ENCODE measurements at regions of chr17 and their contacts with region 1.

Region 1: DNA sequence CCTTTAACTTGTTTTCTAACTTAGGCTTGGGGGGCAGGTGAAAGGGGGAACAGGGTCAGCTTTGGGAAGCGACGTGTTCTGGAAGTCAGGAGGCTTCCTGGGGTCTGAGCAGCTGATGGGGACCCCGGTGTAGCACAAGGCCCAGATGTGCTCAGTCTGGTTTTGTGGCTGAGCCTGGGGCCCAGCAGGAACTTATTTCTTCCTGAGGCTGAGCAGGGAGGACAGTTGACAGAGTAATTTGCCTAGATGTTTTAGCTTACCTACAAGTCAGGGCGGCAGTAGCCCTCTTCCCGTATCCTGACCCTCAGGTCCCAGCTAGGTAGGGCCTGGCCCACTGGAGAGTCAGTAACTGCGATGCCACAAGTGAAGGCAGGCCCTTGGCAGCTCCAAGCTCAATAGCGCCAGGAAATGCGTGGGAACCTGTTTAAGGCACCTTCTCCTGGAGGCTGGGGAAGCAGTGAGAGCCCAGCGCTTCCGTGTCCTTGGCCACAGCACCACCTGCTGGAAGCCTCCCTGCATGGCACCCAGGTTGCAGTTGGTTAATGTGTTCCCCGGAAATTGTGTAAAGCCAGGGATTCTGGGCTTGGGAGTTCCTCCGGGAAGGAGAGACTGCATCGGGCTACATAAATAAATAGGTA is 5.2 kb downstream of the CCR7 start:
- DNase-seq: peak; percentile 74 to 88 (median 82)
- ATAC-seq: peak; percentile 60
- H3K4me3 ChIP-seq: peak overlapping the region; percentile 90
- H3K4me3 Mint-ChIP-seq: peak overlapping the region; percentile 90 to 100 (median 98)
- H3K27ac ChIP-seq: peak overlapping the region; percentile 99
- H3K27ac Mint-ChIP-seq: peak overlapping the region; percentile 92 to 100 (median 100)
- H3K4me1 ChIP-seq: peaks cover 50 to 52% of the 10 kb centered on the region in 2 donors
- H3K4me1 Mint-ChIP-seq: peaks cover 39 to 88% (median 58%) of the 10 kb centered on the region in 7 donors
- H3K27me3 ChIP-seq: no peaks in the 10 kb centered on the region
- H3K27me3 Mint-ChIP-seq: peaks cover 0 to under 1% (median 0%) of the 10 kb centered on the region in 5 donors

Region 2: GRCh38 chr17:40399185-40399584 is 160.9 kb before region 1 on chr17:
- CTCF ChIA-PET with region 1: interaction called, 4 read pairs
- POLR2A ChIA-PET with region 1: interaction called, 3 read pairs
- intact Hi-C with region 1: loop called in 1 of 2 experiments (anchors 1 kb)
- DNase-seq: peak in 6 of 9 donors; percentile 39 to 69 (median 60)
- ATAC-seq: peak; percentile 75
- H3K4me3 ChIP-seq: no peak overlapping the region
- H3K4me3 Mint-ChIP-seq: no peak overlapping the region
- H3K27ac ChIP-seq: no peak overlapping the region
- H3K27ac Mint-ChIP-seq: peak overlapping the region in 3 of 9 donors; percentile 6 to 65 (median 64)
- H3K4me1 ChIP-seq: no peaks in the 10 kb centered on the region
- H3K4me1 Mint-ChIP-seq: peaks cover 8 to 36% (median 22%) of the 10 kb centered on the region in 7 donors
- H3K27me3 ChIP-seq: no peaks in the 10 kb centered on the region
- H3K27me3 Mint-ChIP-seq: no peaks in the 10 kb centered on the region

Region 3: GRCh38 chr17:40443583-40444327 is 116.3 kb before region 1 on chr17:
- CTCF ChIA-PET with region 1: interaction called, 5 read pairs
- POLR2A ChIA-PET with region 1: interaction called, 4 read pairs
- intact Hi-C with region 1: loop called in 1 of 2 experiments (anchors 1 kb)
- DNase-seq: peak; percentile 40 to 80 (median 61)
- ATAC-seq: peak; percentile 87
- H3K4me3 ChIP-seq: peak overlapping the region; percentile 21
- H3K4me3 Mint-ChIP-seq: peak overlapping the region; percentile 65 to 90 (median 84)
- H3K27ac ChIP-seq: peak overlapping the region; percentile 1
- H3K27ac Mint-ChIP-seq: peak overlapping the region in 8 of 9 donors; percentile 60 to 93 (median 78)
- H3K4me1 ChIP-seq: peaks cover 25 to 27% of the 10 kb centered on the region in 2 donors
- H3K4me1 Mint-ChIP-seq: peaks cover 30 to 58% (median 33%) of the 10 kb centered on the region in 7 donors
- H3K27me3 ChIP-seq: no peaks in the 10 kb centered on the region
- H3K27me3 Mint-ChIP-seq: peaks cover 0 to 5% (median 0%) of the 10 kb centered on the region in 5 donors

Region 4: GRCh38 chr17:40542558-40543411 is 17.3 kb before region 1 on chr17:
- CTCF ChIA-PET with region 1: interaction called, 88 read pairs
- POLR2A ChIA-PET with region 1: interaction called, 1,524 read pairs
- intact Hi-C with region 1: loop called (anchors 1 kb)
- DNase-seq: peak in 3 of 9 donors; percentile 5 to 57 (median 57)
- ATAC-seq: no peak
- H3K4me3 ChIP-seq: no peak overlapping the region
- H3K4me3 Mint-ChIP-seq: peak overlapping the region; percentile 16 to 87 (median 67)
- H3K27ac ChIP-seq: peak overlapping the region; percentile 6
- H3K27ac Mint-ChIP-seq: peak overlapping the region; percentile 70 to 97 (median 92)
- H3K4me1 ChIP-seq: peaks cover 69 to 84% of the 10 kb centered on the region in 2 donors
- H3K4me1 Mint-ChIP-seq: peaks cover 60 to 94% (median 89%) of the 10 kb centered on the region in 7 donors
- H3K27me3 ChIP-seq: no peaks in the 10 kb centered on the region
- H3K27me3 Mint-ChIP-seq: no peaks in the 10 kb centered on the region

Region 5: GRCh38 chr17:40588552-40588951 is 28.5 kb after region 1 on chr17:
- CTCF ChIA-PET with region 1: interaction called, 11 read pairs
- POLR2A ChIA-PET with region 1: interaction called, 598 read pairs
- intact Hi-C with region 1: no loop called
- DNase-seq: peak in 1 of 9 donors; percentile 45
- ATAC-seq: no peak
- H3K4me3 ChIP-seq: peak overlapping the region; percentile 14
- H3K4me3 Mint-ChIP-seq: peak overlapping the region; percentile 33 to 90 (median 76)
- H3K27ac ChIP-seq: peak overlapping the region; percentile 47
- H3K27ac Mint-ChIP-seq: peak overlapping the region; percentile 21 to 99 (median 96)
- H3K4me1 ChIP-seq: peaks cover 3 to 61% of the 10 kb centered on the region in 2 donors
- H3K4me1 Mint-ChIP-seq: peaks cover 53 to 94% (median 85%) of the 10 kb centered on the region in 7 donors
- H3K27me3 ChIP-seq: no peaks in the 10 kb centered on the region
- H3K27me3 Mint-ChIP-seq: no peaks in the 10 kb centered on the region

Region 6: DNA sequence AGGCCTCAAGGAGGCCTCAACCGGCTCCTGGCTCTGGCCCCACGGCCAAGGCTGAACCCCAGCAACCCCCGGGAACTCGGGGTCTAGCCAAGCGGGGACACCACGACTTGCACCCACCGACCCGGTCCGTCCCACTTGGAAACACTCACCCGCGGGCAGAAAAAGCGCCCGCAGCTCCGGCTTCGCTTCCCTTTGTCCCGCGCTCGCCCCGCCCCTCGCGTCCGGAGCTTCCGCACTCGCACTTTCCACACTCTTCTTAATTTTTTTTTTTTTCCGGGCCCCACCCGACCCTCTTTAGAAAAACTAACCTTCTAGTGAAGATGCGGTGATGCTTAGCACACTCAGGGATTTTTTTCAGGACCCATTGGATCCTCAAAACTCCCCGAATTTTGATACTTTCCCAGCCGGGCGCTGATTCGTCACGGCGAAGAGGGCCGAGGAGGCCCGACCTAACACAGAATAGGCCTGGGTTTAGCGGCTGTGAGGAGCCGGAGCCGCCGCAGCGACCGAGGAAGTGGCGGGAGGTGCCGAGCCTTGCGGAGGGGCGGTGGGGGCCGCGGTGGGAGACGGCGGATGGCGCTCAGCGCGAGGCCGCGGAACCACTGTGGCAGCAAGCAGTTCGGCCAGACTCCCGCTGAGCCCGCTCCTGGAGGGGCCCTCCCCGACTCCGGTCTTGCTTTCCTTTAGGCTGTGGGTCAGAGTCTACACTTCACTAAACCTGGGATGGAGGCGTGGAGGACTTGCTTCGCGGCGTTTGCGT is 87.7 kb after region 1 on chr17 and contains the start of gene SMARCE1:
- CTCF ChIA-PET with region 1: no interaction called
- POLR2A ChIA-PET with region 1: interaction called, 29 read pairs
- intact Hi-C with region 1: no loop called
- DNase-seq: peak; percentile 63 to 81 (median 76)
- ATAC-seq: peak; percentile 87
- H3K4me3 ChIP-seq: peak within 1 kb of the TSS; percentile 89
- H3K4me3 Mint-ChIP-seq: peak within 1 kb of the TSS; percentile 86 to 99 (median 90)
- H3K27ac ChIP-seq: peak within 1 kb of the TSS; percentile 95
- H3K27ac Mint-ChIP-seq: peak within 1 kb of the TSS; percentile 86 to 100 (median 98)
- H3K4me1 ChIP-seq: peaks cover 11 to 33% of the 10 kb centered on the region in 2 donors
- H3K4me1 Mint-ChIP-seq: peaks cover 27 to 64% (median 46%) of the 10 kb centered on the region in 7 donors
- H3K27me3 ChIP-seq: no peaks in the 10 kb centered on the region
- H3K27me3 Mint-ChIP-seq: no peaks in the 10 kb centered on the region
- total RNA-seq, gene SMARCE1: 65.4 to 101 (median 79.2) TPM